ENCODE measurements at regions of chr3 and their contacts with region 1.

Region 1: DNA sequence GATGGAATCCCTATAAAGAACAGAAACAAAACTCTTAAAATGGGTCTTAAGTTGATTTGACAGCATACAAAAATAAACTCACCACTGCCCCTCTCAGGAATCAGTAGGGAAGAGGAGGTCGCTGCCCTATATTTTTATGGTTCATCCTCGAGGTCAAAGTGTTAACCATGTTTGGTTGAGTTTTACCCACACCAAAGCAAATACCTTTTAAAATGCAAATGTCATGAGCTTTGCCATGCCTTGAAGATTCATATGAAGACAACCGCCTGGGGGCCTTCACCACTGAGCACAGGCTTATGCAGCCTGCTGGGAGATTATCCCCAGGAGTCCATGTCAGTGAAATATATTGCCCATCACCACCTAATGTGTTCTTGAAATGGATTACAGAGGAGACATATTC is 66.1 kb downstream of the GLB1 start:
- DNase-seq: peak; percentile 30
- H3K4me3 Mint-ChIP-seq: no peak overlapping the region
- H3K27ac Mint-ChIP-seq: peak overlapping the region; percentile 81
- H3K4me1 Mint-ChIP-seq: peaks cover 19% of the 10 kb centered on the region
- H3K27me3 Mint-ChIP-seq: no peaks in the 10 kb centered on the region

Region 2: GRCh38 chr3:32675164-32675563 is 355.6 kb before region 1 on chr3:
- intact Hi-C with region 1: no loop called
- DNase-seq: no peak
- H3K4me3 Mint-ChIP-seq: no peak overlapping the region
- H3K27ac Mint-ChIP-seq: no peak overlapping the region
- H3K4me1 Mint-ChIP-seq: no peaks in the 10 kb centered on the region
- H3K27me3 Mint-ChIP-seq: no peaks in the 10 kb centered on the region

Region 3: GRCh38 chr3:33001889-33002288 is 28.9 kb before region 1 on chr3:
- intact Hi-C with region 1: no loop called
- DNase-seq: no peak
- H3K4me3 Mint-ChIP-seq: no peak overlapping the region
- H3K27ac Mint-ChIP-seq: no peak overlapping the region
- H3K4me1 Mint-ChIP-seq: peaks cover 75% of the 10 kb centered on the region
- H3K27me3 Mint-ChIP-seq: no peaks in the 10 kb centered on the region

Region 4: DNA sequence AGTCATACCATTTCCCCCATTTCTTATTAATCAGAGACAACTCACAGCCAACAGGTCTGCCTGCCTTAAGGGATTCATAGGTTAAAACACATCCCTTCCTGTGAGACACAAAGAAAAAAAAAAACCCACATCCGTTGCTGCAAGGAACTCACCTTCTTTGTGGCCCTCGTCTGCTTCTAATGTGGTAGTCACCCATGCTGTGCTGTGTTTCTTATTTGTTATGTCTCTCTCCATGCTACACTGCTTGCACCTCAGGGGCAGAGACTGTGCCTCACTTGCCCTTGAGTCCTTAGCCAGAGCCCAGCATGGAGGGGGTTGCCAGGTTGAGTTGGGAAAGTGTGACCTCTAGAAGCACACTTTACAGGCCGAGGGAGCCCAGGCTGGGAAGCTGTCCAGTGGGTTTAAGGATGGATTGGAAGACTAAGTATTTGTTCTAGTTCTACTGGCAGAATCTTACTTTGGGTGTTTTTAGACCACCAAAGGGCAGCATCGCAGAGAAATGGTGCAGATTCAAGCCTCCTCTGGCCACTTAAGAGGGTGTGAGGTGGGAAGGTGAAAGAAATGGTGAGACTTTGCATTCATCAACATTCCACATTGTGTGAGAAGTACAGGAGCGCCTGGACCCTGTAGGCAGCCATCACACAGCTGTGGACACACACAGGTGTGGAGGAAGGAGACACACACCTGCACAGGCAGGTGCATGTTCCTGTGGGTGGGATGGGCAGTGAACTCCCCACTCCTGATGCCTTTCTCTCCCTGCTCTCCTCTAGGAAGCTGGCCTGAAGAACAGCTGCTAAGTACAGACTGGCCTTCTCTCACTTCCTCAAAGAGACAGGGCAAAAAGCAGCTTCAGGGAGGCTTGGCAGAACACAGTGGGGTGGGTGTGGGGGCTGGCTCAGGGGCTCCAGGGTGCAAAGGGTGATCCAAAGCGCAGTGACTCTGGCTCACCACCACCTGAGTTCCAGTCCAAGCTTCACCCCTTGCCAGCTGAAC is 17.3 kb after region 1 on chr3:
- intact Hi-C with region 1: loop called (anchors 2 kb)
- DNase-seq: peak; percentile 62
- H3K4me3 Mint-ChIP-seq: peak overlapping the region; percentile 66
- H3K27ac Mint-ChIP-seq: peak overlapping the region; percentile 98
- H3K4me1 Mint-ChIP-seq: peaks cover 63% of the 10 kb centered on the region
- H3K27me3 Mint-ChIP-seq: no peaks in the 10 kb centered on the region

Region 5: GRCh38 chr3:33074217-33075067 is 43.6 kb after region 1 on chr3:
- intact Hi-C with region 1: loop called (anchors 2 kb)
- DNase-seq: peak; percentile 51
- H3K4me3 Mint-ChIP-seq: no peak overlapping the region
- H3K27ac Mint-ChIP-seq: peak overlapping the region; percentile 64
- H3K4me1 Mint-ChIP-seq: peaks cover 53% of the 10 kb centered on the region
- H3K27me3 Mint-ChIP-seq: no peaks in the 10 kb centered on the region

Region 6: DNA sequence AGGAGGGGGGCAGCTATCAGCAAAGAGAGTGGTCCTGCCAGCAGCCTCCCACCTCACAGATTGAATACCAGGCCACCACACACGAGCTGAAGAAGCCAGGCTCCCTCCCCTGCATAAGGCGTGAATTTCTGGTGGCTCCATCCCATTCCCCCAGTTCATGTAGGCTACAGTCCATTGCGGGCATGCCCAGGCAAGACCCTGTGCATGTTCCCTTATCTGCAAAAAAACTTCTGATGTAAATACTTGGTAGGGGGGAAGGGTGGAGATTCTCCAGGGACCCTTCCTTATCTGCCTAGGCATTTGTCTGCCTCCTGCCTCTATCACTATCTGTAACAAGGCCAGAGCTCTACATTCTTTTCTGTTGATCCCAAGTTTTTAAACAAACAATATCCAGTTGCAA is 437.0 kb after region 1 on chr3:
- intact Hi-C with region 1: no loop called
- DNase-seq: no peak
- H3K4me3 Mint-ChIP-seq: no peak overlapping the region
- H3K27ac Mint-ChIP-seq: no peak overlapping the region
- H3K4me1 Mint-ChIP-seq: no peaks in the 10 kb centered on the region
- H3K27me3 Mint-ChIP-seq: no peaks in the 10 kb centered on the region

Measured in activated T-helper 2 cell treated with anti-CD3 and anti-CD28 coated beads, Interferon-gamma antibody, Interleukin-2, Interleukin-4, amounts not matched to agents 10 μg/mL and 5 μg/mL and 100 μg/mL, durations not matched to agents 14 hours and 24 hours and 36 hours (primary cell).